Heart left ventricle (tissue), 16 donors: ENCODE measurements at regions of chr19 and their contacts with region 1.

Region 1: DNA sequence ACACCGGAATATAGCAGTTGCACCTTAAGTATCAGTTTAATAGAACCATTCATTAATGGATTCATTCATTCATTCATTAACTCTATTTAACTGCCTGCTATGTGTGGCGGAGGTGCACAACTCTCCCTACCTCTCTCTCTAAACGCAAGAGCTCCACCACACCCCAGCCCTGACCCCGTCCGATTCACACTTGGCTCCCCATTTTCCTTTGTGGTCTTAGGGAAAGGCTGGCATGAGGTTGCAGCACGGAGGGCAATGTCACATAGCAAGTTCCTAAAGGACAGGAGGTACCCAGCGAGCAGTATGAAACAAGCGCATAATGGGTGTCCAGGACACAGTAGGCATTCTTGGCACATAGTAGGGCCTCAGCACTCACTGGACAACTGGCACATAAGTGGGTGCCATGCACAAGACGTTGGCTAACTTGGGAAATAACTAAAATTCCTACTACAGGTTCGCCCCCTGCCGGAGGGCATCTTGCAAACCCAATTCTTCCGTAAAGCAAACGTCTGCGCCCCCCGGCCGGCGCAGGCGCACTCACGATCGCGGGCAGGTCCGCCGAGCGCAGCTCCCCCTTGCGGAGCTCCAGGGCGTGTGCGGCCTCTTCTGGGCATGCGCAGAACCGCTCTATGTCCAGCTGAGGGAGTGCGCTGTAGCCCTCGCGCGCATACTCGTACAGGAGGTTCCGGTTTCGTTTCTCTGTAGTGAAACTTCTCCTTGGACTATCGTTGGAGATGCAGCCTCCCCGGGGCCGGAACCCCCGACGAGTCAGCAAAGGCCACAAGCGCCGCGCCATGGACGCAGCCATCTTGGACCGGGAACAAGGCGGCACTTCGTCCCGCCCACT is at the start of gene SARS2:
- DNase-seq: peak; percentile 91 to 97 (median 93)
- ATAC-seq: peak; percentile 80 to 90 (median 86)
- H3K4me3 ChIP-seq: peak within 1 kb of the TSS; percentile 51 to 91 (median 72)
- H3K27ac ChIP-seq: peak within 1 kb of the TSS; percentile 57 to 94 (median 90)
- H3K4me1 ChIP-seq: peaks cover 4 to 43% (median 23%) of the 10 kb centered on the region in 12 donors
- H3K27me3 ChIP-seq: no peaks in the 10 kb centered on the region
- CTCF ChIP-seq: peak; percentile 98 to 100 (median 100)
- POLR2A ChIP-seq: no peak
- total RNA-seq, gene SARS2: 9.0 to 29.1 (median 16.7) TPM

Region 2: GRCh38 chr19:38389560-38390281 is 540.4 kb before region 1 on chr19:
- intact Hi-C with region 1: loop called in 2 of 10 experiments (anchors 10 kb)
- DNase-seq: peak in 1 of 5 donors; percentile 53
- ATAC-seq: peak in 2 of 4 donors; percentile 10 to 16
- H3K4me3 ChIP-seq: peak overlapping the region in 8 of 12 donors; percentile 33 to 69 (median 58)
- H3K27ac ChIP-seq: peak overlapping the region in 6 of 12 donors; percentile 26 to 80 (median 52)
- H3K4me1 ChIP-seq: peaks cover 0 to 44% (median 25%) of the 10 kb centered on the region in 12 donors
- H3K27me3 ChIP-seq: peaks cover 0 to 46% (median 10%) of the 10 kb centered on the region in 9 donors
- CTCF ChIP-seq: no peak
- POLR2A ChIP-seq: no peak

Region 3: DNA sequence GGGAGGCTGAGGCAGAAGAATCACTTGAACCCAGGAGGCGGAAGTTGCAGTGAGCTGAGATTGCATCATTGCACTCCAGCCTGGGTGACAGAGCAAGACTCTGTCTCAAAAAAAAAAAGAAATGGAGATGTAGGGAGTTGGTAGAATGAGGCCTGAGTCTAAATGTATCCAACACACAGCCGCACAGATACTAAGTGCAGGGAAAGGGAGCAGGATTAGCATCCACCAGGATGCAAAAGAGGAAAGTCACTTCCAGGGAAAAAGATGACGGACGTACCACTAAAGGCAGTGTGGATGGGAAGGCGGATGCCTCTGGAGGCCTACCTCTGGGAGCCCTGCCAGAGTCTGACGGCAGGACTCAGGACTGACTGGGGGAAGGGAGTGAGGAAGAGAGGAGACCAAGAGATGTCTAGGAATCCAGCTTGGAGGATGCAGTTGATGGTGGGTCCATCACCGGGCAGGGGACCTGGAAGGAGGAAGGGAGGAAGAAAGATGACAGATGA is 520.5 kb before region 1 on chr19:
- intact Hi-C with region 1: loop called in 4 of 10 experiments (anchors 5 to 10 kb)
- DNase-seq: peak in 2 of 5 donors; percentile 58 to 60
- ATAC-seq: peak; percentile 50 to 84 (median 76)
- H3K4me3 ChIP-seq: no peak overlapping the region
- H3K27ac ChIP-seq: no peak overlapping the region
- H3K4me1 ChIP-seq: peaks cover 0 to 4% (median 0%) of the 10 kb centered on the region in 12 donors
- H3K27me3 ChIP-seq: no peaks in the 10 kb centered on the region
- CTCF ChIP-seq: no peak
- POLR2A ChIP-seq: no peak

Region 4: DNA sequence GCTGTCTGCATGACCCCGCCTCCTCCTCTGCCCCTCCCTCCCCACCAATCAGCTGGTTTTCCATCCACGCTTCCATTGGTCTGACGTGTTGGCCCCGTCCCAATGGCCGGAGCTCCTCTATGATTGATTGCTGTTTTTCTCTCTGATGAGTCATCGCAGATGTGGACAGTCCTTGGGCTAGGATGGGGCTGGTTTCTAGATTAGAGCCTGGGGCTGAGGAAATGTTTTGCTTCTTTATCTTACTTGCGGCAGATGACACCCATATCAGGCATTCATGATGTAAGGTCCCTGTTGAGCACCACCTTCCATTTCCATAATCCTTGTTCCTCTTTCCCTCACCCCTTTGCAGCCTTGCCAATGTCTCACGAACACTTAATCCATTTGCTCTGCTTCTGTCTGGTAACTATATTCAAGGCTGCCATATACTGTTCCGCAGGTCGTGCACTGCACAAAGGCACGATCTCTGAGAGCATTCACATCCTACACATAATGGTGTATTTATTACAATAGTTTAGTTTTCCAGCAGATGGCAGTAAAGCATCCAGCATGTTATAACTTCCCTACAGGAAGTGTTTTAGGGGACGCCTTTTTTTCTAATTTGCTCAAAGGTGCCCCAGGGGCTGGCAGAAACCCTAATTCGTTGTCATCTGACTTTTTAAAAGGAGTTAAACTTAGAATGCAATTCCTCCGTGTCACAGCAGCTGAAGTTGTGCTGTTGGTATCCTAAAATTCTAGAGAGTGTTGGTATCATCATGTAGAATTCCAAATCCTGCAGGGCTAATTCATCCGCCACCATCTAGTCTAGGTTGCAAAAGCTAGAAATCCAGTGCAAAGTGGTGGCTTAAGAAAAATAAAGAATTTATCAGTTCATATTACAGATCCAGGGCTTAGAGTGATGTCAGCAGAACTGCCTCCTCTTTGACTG is 385.9 kb before region 1 on chr19:
- intact Hi-C with region 1: loop called in 9 of 10 experiments (anchors 1 to 10 kb)
- DNase-seq: peak in 4 of 5 donors; percentile 44 to 67 (median 55)
- ATAC-seq: peak; percentile 64 to 84 (median 83)
- H3K4me3 ChIP-seq: peak overlapping the region in 4 of 12 donors; percentile 9 to 44 (median 26)
- H3K27ac ChIP-seq: peak overlapping the region in 1 of 12 donors; percentile 14
- H3K4me1 ChIP-seq: peaks cover 0 to 14% (median 5%) of the 10 kb centered on the region in 12 donors
- H3K27me3 ChIP-seq: no peaks in the 10 kb centered on the region
- CTCF ChIP-seq: peak; percentile 43 to 69 (median 59)
- POLR2A ChIP-seq: no peak

Region 5: DNA sequence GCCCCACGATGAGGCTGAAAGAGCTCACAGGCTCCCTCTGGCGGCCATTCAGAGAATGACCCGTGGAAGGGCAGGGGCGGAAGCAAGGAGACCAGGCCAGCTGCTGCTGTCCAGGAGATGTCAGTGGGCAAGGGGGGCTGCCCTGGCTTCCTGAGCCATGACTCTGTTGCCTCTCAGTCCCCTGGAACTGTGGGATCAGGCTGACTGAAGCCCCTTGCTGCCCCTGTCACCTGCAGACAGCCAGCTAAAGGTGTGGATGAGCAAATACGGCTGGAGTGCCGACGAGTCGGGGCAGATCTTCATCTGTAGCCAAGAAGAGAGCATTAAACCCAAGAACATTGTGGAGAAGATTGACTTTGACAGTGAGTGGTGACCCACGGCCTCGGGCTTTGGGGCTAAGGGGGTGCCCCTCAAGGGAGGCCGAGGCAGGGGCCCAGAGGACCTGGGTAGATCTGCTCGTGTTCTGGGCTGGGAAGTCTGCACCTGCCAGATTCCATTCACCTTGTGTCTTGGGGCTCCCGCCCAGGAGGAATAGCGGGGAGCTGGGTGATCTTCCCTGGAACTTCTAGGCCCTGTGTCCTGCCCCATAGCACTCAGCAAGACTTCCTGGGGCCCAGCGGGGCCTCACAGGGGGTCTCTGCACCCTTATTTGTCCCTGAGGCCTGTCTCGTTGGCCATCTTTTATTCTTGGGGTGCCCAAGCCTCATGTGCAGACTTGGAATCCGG is 295.2 kb before region 1 on chr19:
- intact Hi-C with region 1: loop called in 7 of 10 experiments (anchors 5 to 10 kb)
- DNase-seq: peak; percentile 64 to 87 (median 75)
- ATAC-seq: peak in 3 of 4 donors; percentile 47 to 55 (median 50)
- H3K4me3 ChIP-seq: no peak overlapping the region
- H3K27ac ChIP-seq: peak overlapping the region in 10 of 12 donors; percentile 20 to 52 (median 38)
- H3K4me1 ChIP-seq: peaks cover 0 to 34% (median 23%) of the 10 kb centered on the region in 12 donors
- H3K27me3 ChIP-seq: no peaks in the 10 kb centered on the region
- CTCF ChIP-seq: peak; percentile 91 to 97 (median 95)
- POLR2A ChIP-seq: no peak

Region 6: DNA sequence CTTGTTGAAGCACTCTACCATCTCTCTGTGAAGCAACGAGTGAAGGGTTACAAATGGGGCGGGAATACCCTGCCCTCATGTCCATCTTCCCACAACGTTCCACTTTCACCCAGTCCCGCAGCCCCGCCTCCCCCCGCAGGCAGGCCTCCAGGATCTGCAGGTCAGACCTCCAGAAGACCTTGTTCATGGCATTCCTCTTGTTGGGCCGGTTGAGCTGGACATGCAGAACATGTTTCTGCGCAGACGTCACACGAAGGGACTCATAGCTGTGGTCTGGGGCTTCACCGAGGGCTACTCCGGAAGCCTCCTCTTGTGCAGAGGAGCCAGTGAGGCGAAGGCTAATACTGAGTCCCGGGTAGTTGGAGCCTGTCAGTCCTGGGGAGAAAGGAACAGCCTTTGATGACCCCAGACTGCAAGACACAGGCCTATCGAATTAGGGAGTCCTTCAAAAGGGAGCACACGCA is 99.0 kb before region 1 on chr19:
- intact Hi-C with region 1: loop called in 1 of 10 experiments (anchors 10 kb)
- DNase-seq: peak; percentile 56 to 88 (median 77)
- ATAC-seq: peak; percentile 56 to 74 (median 60)
- H3K4me3 ChIP-seq: peak overlapping the region; percentile 43 to 90 (median 72)
- H3K27ac ChIP-seq: peak overlapping the region; percentile 83 to 96 (median 94)
- H3K4me1 ChIP-seq: peaks cover 0 to 50% (median 34%) of the 10 kb centered on the region in 12 donors
- H3K27me3 ChIP-seq: no peaks in the 10 kb centered on the region
- CTCF ChIP-seq: no peak
- POLR2A ChIP-seq: no peak

Region 7: GRCh38 chr19:38899447-38900219 is 30.5 kb before region 1 on chr19 and contains the starts of genes NFKBIB and SIRT2:
- intact Hi-C with region 1: loop called in 1 of 10 experiments (anchors 2 kb)
- DNase-seq: peak; percentile 99 to 100 (median 100)
- ATAC-seq: peak; percentile 97 to 99 (median 98)
- H3K4me3 ChIP-seq: peak within 1 kb of the TSS; percentile 74 to 98 (median 92)
- H3K27ac ChIP-seq: peak within 1 kb of the TSS; percentile 38 to 95 (median 91)
- H3K4me1 ChIP-seq: peaks cover 6 to 46% (median 22%) of the 10 kb centered on the region in 12 donors
- H3K27me3 ChIP-seq: no peaks in the 10 kb centered on the region
- CTCF ChIP-seq: peak in 1 of 12 donors; percentile 13
- POLR2A ChIP-seq: peak; percentile 75 to 95
- total RNA-seq, gene NFKBIB: 17.2 to 38.6 (median 22.2) TPM
- total RNA-seq, gene SIRT2: 58.3 to 158 (median 62.4) TPM